Activated CD8-positive, alpha-beta T cell treated with anti-CD3 and anti-CD28 coated beads for 36 hours (primary cell): ENCODE measurements at regions of chr1 and their contacts with region 1.

Region 1: DNA sequence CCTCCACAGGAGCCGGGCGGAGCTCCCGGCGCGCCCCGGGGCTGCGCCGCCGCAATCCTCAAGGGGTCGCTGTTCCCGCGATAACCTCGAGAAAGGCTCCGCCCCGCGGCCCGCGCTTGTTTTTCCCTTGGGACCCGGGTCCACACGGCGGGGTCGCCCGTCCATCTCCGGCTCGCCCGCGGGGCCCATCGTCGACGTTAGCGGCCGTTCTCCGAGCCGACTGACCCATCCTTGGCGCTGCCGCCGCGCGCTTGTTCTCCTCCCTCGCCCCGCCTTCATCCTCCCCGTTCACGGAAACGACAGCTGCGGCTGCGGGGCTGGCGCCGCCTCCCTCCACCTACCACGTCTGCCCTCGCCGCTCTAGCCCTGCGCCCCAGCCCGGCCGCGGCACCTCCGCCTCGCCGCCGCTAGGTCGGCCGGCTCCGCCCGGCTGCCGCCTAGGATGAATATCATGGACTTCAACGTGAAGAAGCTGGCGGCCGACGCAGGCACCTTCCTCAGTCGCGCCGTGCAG is at the start of gene SH3GLB1:
- DNase-seq: peak; percentile 91
- ATAC-seq: peak; percentile 89
- H3K4me3 Mint-ChIP-seq: peak within 1 kb of the TSS; percentile 94
- H3K27ac Mint-ChIP-seq: peak within 1 kb of the TSS; percentile 98
- H3K4me1 Mint-ChIP-seq: peaks cover 37% of the 10 kb centered on the region
- H3K27me3 Mint-ChIP-seq: no peaks in the 10 kb centered on the region
- CTCF ChIP-seq: peak; percentile 90
- total RNA-seq, gene SH3GLB1: 46.1 to 47.3 TPM

Region 2: DNA sequence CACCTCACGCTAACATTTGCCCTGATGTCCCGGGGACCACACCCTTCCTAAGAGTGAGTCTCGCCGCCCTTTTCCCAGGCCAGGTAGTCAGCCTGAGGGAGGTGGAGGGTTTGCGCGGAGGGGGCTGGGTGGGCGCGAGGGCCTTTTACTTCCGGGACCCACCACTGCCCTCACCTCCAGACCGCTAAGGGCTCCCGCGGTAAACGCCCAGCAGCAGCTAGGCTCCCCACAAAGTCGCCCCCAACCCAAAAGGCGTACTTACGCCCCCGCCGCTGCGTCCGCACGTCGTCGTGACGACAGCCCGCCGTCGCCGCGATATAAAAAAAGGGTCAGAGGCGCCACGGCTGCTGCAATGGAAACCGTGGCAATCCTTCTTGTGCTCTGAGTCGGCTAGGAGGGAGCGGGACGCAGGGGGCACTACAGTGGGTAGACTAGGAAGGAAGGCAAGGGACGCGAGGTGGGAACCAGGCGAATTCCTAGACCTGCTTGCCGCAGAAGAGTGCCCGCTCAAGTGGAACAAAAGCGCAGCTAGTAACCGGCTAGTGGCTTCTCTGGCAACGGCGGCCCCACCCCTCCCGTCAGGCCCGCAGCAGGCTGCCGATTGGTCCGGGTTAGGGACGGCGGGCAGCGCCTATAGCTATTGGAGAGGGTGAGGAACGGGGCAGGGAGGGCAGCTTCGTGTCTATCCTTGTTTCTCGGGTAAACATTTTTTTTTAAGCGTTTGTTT is 308.6 kb before region 1 on chr1 and contains the start of gene ODF2L:
- CTCF ChIA-PET with region 1: interaction called, 5 read pairs
- POLR2A ChIA-PET with region 1: interaction called, 3 read pairs
- intact Hi-C with region 1: loop called (anchors 10 kb)
- DNase-seq: peak; percentile 93
- ATAC-seq: peak; percentile 100
- H3K4me3 Mint-ChIP-seq: peak within 1 kb of the TSS; percentile 95
- H3K27ac Mint-ChIP-seq: peak within 1 kb of the TSS; percentile 93
- H3K4me1 Mint-ChIP-seq: peaks cover 49% of the 10 kb centered on the region
- H3K27me3 Mint-ChIP-seq: no peaks in the 10 kb centered on the region
- CTCF ChIP-seq: no peak
- total RNA-seq, gene ODF2L: 21.7 to 23.8 TPM

Region 3: GRCh38 chr1:86733340-86733739 is 28.8 kb after region 1 on chr1:
- CTCF ChIA-PET with region 1: interaction called, 29 read pairs
- POLR2A ChIA-PET with region 1: interaction called, 5 read pairs
- intact Hi-C with region 1: no loop called
- DNase-seq: no peak
- ATAC-seq: no peak
- H3K4me3 Mint-ChIP-seq: no peak overlapping the region
- H3K27ac Mint-ChIP-seq: peak overlapping the region; percentile 55
- H3K4me1 Mint-ChIP-seq: no peaks in the 10 kb centered on the region
- H3K27me3 Mint-ChIP-seq: no peaks in the 10 kb centered on the region
- CTCF ChIP-seq: no peak

Region 4: GRCh38 chr1:86765073-86765472 is 60.6 kb after region 1 on chr1:
- CTCF ChIA-PET with region 1: interaction called, 3 read pairs
- POLR2A ChIA-PET with region 1: no interaction called
- intact Hi-C with region 1: loop called (anchors 10 kb)
- DNase-seq: no peak
- ATAC-seq: no peak
- H3K4me3 Mint-ChIP-seq: no peak overlapping the region
- H3K27ac Mint-ChIP-seq: no peak overlapping the region
- H3K4me1 Mint-ChIP-seq: no peaks in the 10 kb centered on the region
- H3K27me3 Mint-ChIP-seq: peaks cover 2% of the 10 kb centered on the region
- CTCF ChIP-seq: no peak